T-cell (primary cell): ENCODE measurements at regions of chr12 and their contacts with region 1.

Region 1: GRCh38 chr12:20883288-20883687 is 72.8 kb downstream of the SLCO1B3 start:
- DNase-seq: no peak
- ATAC-seq: no peak
- H3K4me3 ChIP-seq: no peak overlapping the region
- H3K4me3 Mint-ChIP-seq: no peak overlapping the region
- H3K27ac ChIP-seq: no peak overlapping the region
- H3K27ac Mint-ChIP-seq: no peak overlapping the region
- H3K4me1 ChIP-seq: no peaks in the 10 kb centered on the region
- H3K4me1 Mint-ChIP-seq: no peaks in the 10 kb centered on the region
- H3K27me3 ChIP-seq: no peaks in the 10 kb centered on the region
- H3K27me3 Mint-ChIP-seq: no peaks in the 10 kb centered on the region

Region 2: DNA sequence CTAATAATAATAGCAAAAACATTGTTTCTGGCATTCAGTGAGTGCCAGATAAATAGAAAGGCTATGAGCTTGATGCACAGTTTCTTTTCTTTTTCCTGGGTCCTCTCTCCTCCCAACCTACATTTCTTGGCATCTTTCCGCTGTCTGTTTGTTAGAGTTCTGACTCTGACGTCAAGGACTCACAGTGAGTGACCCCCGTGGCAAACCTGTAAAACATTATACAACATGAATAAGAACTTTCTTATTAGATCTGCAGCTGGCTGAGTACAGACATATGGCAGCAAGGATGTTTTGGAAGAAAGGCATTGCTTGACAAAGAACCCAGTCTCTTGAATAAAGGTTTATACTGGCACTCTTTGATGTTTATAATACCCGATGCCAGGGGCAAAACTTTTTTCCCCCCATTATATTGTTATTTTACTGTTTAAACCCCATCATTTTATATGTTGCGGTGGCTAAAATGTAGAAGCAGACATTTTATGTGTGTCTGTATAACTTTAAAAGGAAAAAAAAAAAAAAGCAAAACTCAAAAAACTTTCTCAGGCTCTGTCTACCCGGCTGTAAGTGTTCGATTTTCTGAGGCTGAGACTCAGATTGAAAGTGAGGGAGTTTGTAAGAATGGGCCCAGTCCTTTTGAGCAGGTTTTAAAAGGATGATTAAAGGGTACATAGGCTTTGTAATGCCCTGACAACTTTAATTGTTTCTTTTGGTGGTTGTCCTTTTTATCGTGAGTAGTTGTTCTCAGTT is 355.7 kb before region 1 on chr12:
- CTCF ChIA-PET with region 1: no interaction called
- POLR2A ChIA-PET with region 1: no interaction called
- DNase-seq: no peak
- ATAC-seq: no peak
- H3K4me3 ChIP-seq: no peak overlapping the region
- H3K4me3 Mint-ChIP-seq: no peak overlapping the region
- H3K27ac ChIP-seq: no peak overlapping the region
- H3K27ac Mint-ChIP-seq: no peak overlapping the region
- H3K4me1 ChIP-seq: no peaks in the 10 kb centered on the region
- H3K4me1 Mint-ChIP-seq: no peaks in the 10 kb centered on the region
- H3K27me3 ChIP-seq: no peaks in the 10 kb centered on the region
- H3K27me3 Mint-ChIP-seq: no peaks in the 10 kb centered on the region

Region 3: GRCh38 chr12:20931894-20932293 is 48.6 kb after region 1 on chr12:
- CTCF ChIA-PET with region 1: interaction called in 1 of 2 experiments, 11 read pairs
- POLR2A ChIA-PET with region 1: no interaction called
- DNase-seq: no peak
- ATAC-seq: no peak
- H3K4me3 ChIP-seq: no peak overlapping the region
- H3K4me3 Mint-ChIP-seq: no peak overlapping the region
- H3K27ac ChIP-seq: no peak overlapping the region
- H3K27ac Mint-ChIP-seq: no peak overlapping the region
- H3K4me1 ChIP-seq: no peaks in the 10 kb centered on the region
- H3K4me1 Mint-ChIP-seq: no peaks in the 10 kb centered on the region
- H3K27me3 ChIP-seq: no peaks in the 10 kb centered on the region
- H3K27me3 Mint-ChIP-seq: no peaks in the 10 kb centered on the region